Endothelial cell of umbilical vein (primary cell): ENCODE measurements at regions of chr22 and their contacts with region 1.

Region 1: GRCh38 chr22:23928187-23928586 is 32.8 kb downstream of the GSTT2B start:
- DNase-seq: no peak
- H3K4me3 ChIP-seq: no peak overlapping the region
- H3K27ac ChIP-seq: no peak overlapping the region
- H3K4me1 ChIP-seq: no peaks in the 10 kb centered on the region
- H3K27me3 ChIP-seq: no peaks in the 10 kb centered on the region
- CTCF ChIP-seq: no peak
- POLR2A ChIP-seq: no peak

Region 2: GRCh38 chr22:23913661-23914353 is 14.4 kb before region 1 on chr22:
- CTCF ChIA-PET with region 1: interaction called, 9 read pairs
- POLR2A ChIA-PET with region 1: no interaction called
- dilution Hi-C with region 1: no loop called
- intact Hi-C with region 1: loop called (anchors 2 kb)
- DNase-seq: peak; percentile 99
- H3K4me3 ChIP-seq: peak overlapping the region; percentile 45 to 87 (median 72)
- H3K27ac ChIP-seq: peak overlapping the region; percentile 84
- H3K4me1 ChIP-seq: peaks cover 12% of the 10 kb centered on the region
- H3K27me3 ChIP-seq: peaks cover 0 to 4% of the 10 kb centered on the region in 2 experiments
- CTCF ChIP-seq: no peak
- POLR2A ChIP-seq: peak; percentile 86

Region 3: DNA sequence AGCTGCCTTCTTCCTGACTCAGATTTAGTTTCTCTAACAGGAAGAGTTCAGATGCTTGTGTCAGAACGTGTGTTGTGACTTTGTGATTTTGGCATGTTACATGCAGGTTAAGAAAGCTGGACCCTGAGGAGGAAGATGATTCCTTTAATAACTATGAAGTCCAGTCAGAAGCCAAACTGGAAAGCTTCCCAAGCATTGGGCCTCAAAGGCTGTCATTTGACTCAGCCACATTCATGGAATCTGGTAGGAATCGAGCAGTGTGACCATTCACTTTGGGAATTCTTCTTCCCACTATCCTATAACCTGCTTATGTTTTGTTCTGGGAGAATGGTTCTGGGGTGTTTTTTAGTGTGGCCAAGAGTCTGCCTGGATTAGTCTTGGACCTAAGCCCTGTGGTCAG is 130.9 kb after region 1 on chr22:
- CTCF ChIA-PET with region 1: no interaction called
- POLR2A ChIA-PET with region 1: no interaction called
- dilution Hi-C with region 1: no loop called
- intact Hi-C with region 1: no loop called
- DNase-seq: peak; percentile 72
- H3K4me3 ChIP-seq: no peak overlapping the region
- H3K27ac ChIP-seq: peak overlapping the region; percentile 90
- H3K4me1 ChIP-seq: peaks cover 32% of the 10 kb centered on the region
- H3K27me3 ChIP-seq: no peaks in the 10 kb centered on the region
- CTCF ChIP-seq: no peak
- POLR2A ChIP-seq: no peak